ENCODE measurements at regions of chr12 and their contacts with region 1.

Region 1: DNA sequence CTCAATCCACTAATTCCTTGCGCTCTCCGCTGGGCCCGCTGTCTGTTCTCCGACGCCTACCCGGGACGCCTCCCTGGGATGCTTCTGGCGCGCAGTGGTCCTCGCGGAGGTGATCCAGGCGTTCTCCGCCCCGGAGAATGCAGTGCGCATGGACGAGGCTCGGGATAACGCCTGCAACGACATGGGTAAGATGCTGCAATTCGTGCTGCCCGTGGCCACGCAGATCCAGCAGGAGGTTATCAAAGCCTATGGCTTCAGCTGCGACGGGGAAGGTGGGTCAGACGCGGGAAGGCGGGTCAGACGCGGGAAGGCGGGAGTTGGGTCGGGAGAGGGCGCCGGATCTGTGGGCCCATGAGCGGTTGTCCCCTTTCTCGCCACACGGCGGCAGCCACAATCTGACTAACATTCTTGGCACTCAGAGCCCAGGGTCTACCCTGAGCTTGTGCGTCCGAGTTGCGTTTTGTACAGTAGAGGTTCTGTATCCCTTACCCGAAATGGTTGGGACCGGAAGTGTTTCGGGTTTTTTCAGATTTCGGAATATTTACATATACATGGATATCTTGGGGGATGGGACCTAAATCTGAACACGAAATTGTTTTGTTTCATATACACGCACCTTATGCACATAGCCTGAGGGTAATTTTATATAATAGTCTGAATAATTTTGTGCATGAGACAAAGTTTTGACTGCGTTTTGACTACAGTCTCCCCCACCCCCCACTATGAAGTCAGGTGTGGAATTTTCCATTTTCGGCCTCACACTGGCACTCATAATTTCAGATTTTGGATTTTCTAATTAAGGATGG is 762 bp downstream of the C12orf57 start:
- DNase-seq: peak; percentile 96
- H3K4me3 Mint-ChIP-seq: peak overlapping the region; percentile 85
- H3K27ac Mint-ChIP-seq: peak overlapping the region; percentile 98
- H3K4me1 Mint-ChIP-seq: peaks cover 32% of the 10 kb centered on the region
- H3K27me3 Mint-ChIP-seq: no peaks in the 10 kb centered on the region
- CTCF ChIP-seq: peak; percentile 63

Region 2: GRCh38 chr12:6867413-6868210 is 77.0 kb before region 1 on chr12 and contains the start of gene TPI1:
- CTCF ChIA-PET with region 1: interaction called, 21 read pairs
- POLR2A ChIA-PET with region 1: interaction called, 62 read pairs
- intact Hi-C with region 1: loop called (anchors 2 kb)
- DNase-seq: peak; percentile 70
- H3K4me3 Mint-ChIP-seq: peak within 1 kb of the TSS; percentile 86
- H3K27ac Mint-ChIP-seq: peak within 1 kb of the TSS; percentile 82
- H3K4me1 Mint-ChIP-seq: peaks cover 30% of the 10 kb centered on the region
- H3K27me3 Mint-ChIP-seq: no peaks in the 10 kb centered on the region
- CTCF ChIP-seq: no peak
- total RNA-seq, gene TPI1: 498 and 549 TPM in 2 replicates

Region 3: GRCh38 chr12:6927379-6928024 is 17.1 kb before region 1 on chr12 and contains the start of gene ATN1:
- CTCF ChIA-PET with region 1: interaction called, 114 read pairs
- POLR2A ChIA-PET with region 1: interaction called, 167 read pairs
- intact Hi-C with region 1: no loop called
- DNase-seq: peak; percentile 66
- H3K4me3 Mint-ChIP-seq: peak within 1 kb of the TSS; percentile 91
- H3K27ac Mint-ChIP-seq: peak within 1 kb of the TSS; percentile 92
- H3K4me1 Mint-ChIP-seq: peaks cover 69% of the 10 kb centered on the region
- H3K27me3 Mint-ChIP-seq: no peaks in the 10 kb centered on the region
- CTCF ChIP-seq: no peak
- total RNA-seq, gene ATN1: 83.7 and 84.7 TPM in 2 replicates

Region 4: DNA sequence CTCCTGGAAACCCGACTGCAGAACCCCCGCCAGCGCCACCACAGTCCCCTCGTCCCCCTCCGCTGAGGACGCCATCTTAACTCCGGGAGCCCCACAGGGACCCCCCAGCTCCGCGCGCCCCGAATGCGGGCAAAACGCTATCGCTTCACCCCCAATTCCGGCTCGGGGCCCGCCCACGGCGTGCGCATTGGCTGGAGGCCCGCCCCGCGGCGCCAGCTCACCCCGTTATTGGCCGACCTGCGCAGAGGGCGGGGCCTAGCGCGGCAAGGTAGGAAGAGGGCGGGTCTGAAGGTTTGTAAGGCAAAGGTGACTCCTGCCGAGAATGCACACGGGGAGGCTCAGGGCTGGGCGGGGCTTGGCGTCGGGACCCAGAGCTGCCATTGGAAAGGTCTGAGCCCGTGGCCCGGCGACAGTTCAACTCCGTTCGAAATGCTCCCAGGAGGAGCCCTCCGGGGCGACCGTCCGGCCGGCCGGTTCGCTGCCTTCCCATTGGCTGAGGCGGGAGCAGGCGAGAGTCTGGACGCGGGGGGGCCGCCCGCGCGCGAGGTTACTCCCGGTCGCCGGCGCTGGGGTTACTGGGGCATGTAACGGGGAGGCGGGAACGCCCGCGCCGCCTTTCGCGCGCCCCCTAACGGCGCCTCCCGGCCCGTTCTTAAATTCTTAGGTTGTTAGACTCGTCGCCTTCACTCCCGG is 73.9 kb after region 1 on chr12 and contains the start of gene LPCAT3:
- CTCF ChIA-PET with region 1: interaction called, 13 read pairs
- POLR2A ChIA-PET with region 1: interaction called, 52 read pairs
- intact Hi-C with region 1: no loop called
- DNase-seq: peak; percentile 96
- H3K4me3 Mint-ChIP-seq: peak within 1 kb of the TSS; percentile 80
- H3K27ac Mint-ChIP-seq: peak within 1 kb of the TSS; percentile 29
- H3K4me1 Mint-ChIP-seq: peaks cover 32% of the 10 kb centered on the region
- H3K27me3 Mint-ChIP-seq: no peaks in the 10 kb centered on the region
- CTCF ChIP-seq: peak; percentile 77
- total RNA-seq, gene LPCAT3: 14.4 and 15.4 TPM in 2 replicates

Region 5: DNA sequence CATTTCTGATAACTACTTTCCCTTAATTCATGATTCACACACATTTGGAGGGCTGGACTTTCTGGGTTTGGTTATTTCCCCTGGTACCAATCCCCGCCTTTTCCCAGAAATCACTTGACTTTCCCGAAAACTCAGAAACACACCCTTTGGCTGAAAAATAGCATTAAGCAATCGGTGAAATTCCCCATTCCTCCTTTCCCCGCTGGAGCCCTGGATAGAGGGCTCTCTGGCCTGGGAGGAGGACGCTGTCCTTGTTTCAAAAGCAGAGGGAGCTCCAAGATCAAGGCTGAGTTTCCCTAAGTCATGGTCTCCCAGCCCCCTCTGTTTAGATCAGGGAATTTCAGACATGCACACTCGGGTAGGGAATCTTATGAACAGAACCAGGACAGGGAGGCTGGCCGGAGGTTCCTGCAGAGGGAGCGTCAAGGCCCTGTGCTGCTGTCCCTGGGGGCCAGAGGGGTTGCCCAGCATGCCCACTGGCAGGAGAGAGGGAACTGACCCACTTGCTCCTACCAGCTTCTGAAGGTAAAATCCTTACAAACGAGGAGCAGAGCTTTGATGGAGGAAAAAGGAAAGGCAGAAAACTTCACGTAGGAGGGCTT is 115.9 kb after region 1 on chr12 and contains the start of gene C1S:
- CTCF ChIA-PET with region 1: interaction called, 5 read pairs
- POLR2A ChIA-PET with region 1: interaction called, 16 read pairs
- intact Hi-C with region 1: no loop called
- DNase-seq: peak; percentile 98
- H3K4me3 Mint-ChIP-seq: peak within 1 kb of the TSS; percentile 63
- H3K27ac Mint-ChIP-seq: peak within 1 kb of the TSS; percentile 87
- H3K4me1 Mint-ChIP-seq: peaks cover 20% of the 10 kb centered on the region
- H3K27me3 Mint-ChIP-seq: peaks cover under 1% of the 10 kb centered on the region
- CTCF ChIP-seq: peak; percentile 70
- total RNA-seq, gene C1S: 6.0 and 11.5 TPM in 2 replicates

Region 6: DNA sequence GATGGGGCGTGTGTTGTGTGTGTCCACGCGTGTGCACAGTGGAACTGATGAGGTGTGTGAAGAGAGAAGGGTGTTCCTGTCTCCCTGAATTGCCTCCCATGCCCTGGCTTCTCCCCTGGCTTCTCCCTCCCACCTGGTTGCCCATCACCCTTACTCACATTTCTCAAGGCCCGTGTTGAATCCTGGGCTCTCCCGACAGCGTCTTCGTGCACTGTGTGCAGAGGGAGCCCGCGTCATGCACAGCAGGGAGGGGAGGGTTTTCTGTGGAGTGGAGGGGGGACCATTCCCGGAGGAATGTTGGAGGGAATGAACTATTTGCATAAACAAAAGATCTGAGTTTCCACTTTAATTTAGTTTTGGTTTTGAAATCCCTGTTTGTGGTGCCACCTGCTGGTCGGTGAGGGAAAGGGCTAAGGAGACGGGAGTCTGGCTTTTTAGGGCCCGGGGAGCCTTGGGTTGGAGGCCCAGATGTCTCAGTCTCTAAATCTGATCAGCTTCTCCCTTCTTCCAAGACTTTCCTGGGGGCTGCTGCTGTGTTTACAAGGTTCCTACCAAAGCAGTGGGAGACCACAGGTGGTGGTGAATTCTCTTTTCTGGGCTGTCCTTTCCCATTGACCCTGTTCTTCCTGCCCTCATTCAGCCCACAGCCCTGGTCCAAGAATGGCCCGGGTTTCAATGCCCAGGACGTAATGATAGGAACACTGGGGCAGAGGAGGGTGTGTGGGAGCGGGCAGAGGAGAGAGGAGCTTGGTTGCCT is 147.8 kb after region 1 on chr12 and contains the start of gene C1R:
- CTCF ChIA-PET with region 1: interaction called, 3 read pairs
- POLR2A ChIA-PET with region 1: interaction called, 13 read pairs
- intact Hi-C with region 1: loop called (anchors 1 kb)
- DNase-seq: peak; percentile 88
- H3K4me3 Mint-ChIP-seq: peak within 1 kb of the TSS; percentile 79
- H3K27ac Mint-ChIP-seq: peak within 1 kb of the TSS; percentile 93
- H3K4me1 Mint-ChIP-seq: peaks cover 26% of the 10 kb centered on the region
- H3K27me3 Mint-ChIP-seq: no peaks in the 10 kb centered on the region
- CTCF ChIP-seq: peak; percentile 75
- total RNA-seq, gene C1R: 13.1 and 16.7 TPM in 2 replicates

Region 7: GRCh38 chr12:7310070-7310469 is 365.5 kb after region 1 on chr12:
- CTCF ChIA-PET with region 1: no interaction called
- POLR2A ChIA-PET with region 1: no interaction called
- intact Hi-C with region 1: no loop called
- DNase-seq: no peak
- H3K4me3 Mint-ChIP-seq: no peak overlapping the region
- H3K27ac Mint-ChIP-seq: no peak overlapping the region
- H3K4me1 Mint-ChIP-seq: no peaks in the 10 kb centered on the region
- H3K27me3 Mint-ChIP-seq: no peaks in the 10 kb centered on the region
- CTCF ChIP-seq: no peak

Measured in MCF 10A (cell line).